Mammary epithelial cell (primary cell): ENCODE measurements at regions of chr7 and their contacts with region 1.

Region 1: DNA sequence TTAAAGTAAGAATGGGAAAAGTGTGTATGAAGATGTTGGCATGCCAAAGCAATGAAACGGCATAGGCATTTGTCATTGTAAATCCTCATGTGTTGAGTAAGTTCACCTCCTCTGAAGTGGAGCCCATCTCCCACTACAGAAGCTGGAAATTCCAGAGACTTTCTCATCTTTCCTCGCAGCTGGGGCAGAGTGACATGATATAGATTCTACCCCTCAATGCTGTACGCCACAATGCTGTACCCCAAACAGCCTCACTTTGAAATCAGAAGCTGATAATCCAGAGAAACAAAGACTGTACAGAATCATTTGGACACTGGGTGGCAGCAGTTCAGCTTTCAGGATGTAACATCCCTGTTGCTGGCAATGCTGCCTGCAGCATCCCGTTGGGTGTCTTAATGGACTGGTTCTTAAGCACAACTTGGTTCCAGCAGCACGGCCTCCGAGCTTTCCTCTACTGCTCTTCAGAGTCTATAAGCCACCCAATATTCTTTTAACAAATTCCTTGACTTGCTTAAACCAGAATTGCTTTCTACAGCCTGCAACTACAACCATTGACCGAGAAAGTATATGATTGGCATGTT is 18.8 kb downstream of the ZC3HAV1L start:
- DNase-seq: peak; percentile 50
- H3K4me3 ChIP-seq: no peak overlapping the region
- H3K27ac ChIP-seq: no peak overlapping the region
- H3K4me1 ChIP-seq: no peaks in the 10 kb centered on the region
- H3K27me3 ChIP-seq: no peaks in the 10 kb centered on the region
- CTCF ChIP-seq: peak; percentile 54 to 79

Region 2: DNA sequence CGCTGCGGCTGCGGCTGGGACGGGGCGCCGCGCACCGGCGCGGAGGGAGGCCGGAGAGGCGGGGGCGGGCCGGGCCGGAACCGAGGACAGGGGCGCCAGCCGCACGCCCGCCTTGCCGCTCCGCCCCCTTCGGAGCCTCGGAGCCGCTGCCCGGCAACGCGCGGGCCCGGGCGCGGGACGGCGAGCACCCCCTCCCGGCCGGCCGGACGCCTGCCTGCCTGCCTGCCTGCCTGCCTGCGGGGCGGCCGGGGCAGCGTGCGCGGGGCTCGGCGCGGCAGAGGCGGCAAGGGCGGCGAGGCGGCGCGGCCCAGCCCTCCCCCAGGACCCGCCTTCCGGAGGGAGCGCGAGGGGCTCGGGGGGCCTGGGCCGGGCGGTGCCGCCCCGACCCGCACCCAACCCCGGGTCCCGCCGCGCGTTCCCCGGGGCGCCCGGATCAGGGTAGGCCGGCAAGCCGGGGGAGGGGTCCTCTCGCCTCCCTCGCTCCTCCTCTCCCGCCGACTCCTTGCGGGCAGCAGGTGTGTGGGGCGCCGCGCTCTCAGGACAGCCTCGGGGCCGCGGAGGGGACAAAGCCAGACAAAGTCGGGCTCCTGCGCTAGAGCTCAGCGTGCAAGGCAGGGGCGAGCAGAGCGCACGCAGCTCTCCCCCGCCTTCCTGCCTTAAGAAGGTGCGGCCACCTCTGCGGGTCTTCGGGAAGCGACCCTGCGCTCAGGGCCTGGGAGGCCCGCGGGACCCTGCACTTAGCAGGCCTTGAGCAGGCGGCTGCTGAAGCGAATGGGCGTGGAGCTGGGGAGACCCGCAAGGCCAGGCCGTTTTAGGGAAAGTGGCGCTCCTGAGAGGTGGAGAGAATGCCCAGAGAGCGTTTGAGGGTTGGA is 35.5 kb before region 1 on chr7 and contains the start of gene KIAA1549:
- CTCF ChIA-PET with region 1: no interaction called
- dilution Hi-C with region 1: no loop called
- in situ Hi-C with region 1: no loop called
- intact Hi-C with region 1: no loop called
- DNase-seq: peak; percentile 60
- H3K4me3 ChIP-seq: peak within 1 kb of the TSS; percentile 53 to 96 (median 79)
- H3K27ac ChIP-seq: peak within 1 kb of the TSS; percentile 27
- H3K4me1 ChIP-seq: peaks cover 22% of the 10 kb centered on the region
- H3K27me3 ChIP-seq: no peaks in the 10 kb centered on the region
- CTCF ChIP-seq: peak in 1 of 2 donors; percentile 16
- total RNA-seq, gene KIAA1549: 3.8 to 7.7 TPM

Region 3: DNA sequence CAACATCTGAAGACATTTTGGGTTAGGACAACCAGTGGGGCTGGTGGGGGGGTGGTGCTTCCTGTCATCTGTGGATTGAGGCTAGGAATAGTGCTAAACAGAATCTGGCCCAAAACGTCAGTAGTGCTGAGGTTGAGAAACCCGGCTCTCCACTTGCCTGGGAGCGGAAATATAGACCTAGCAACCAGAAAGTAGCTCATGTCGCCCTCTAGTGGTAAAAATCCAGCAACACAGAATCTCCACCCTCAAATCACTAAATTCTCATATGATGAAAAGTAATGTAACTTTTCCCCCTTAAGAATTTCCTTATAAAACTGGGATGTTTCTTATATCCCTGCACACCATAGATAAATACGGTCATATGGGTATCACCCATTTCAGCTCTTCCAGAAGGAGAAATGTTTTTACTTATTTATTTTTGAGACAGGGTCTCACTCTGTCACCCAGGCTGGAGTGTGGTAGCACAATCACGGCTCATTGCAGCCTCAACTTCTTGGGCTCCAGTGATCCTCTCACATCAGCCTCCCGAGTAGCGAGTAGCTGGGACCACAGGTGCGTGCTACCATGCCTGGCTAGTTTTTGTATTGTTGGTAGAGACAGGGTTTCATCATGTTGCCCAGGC is 58.1 kb after region 1 on chr7:
- CTCF ChIA-PET with region 1: interaction called, 5 read pairs
- dilution Hi-C with region 1: no loop called
- in situ Hi-C with region 1: no loop called
- intact Hi-C with region 1: loop called (anchors 1 kb)
- DNase-seq: peak; percentile 53
- H3K4me3 ChIP-seq: no peak overlapping the region
- H3K27ac ChIP-seq: no peak overlapping the region
- H3K4me1 ChIP-seq: no peaks in the 10 kb centered on the region
- H3K27me3 ChIP-seq: no peaks in the 10 kb centered on the region
- CTCF ChIP-seq: peak; percentile 74 to 89

Region 4: GRCh38 chr7:139127648-139128047 is 110.6 kb after region 1 on chr7:
- CTCF ChIA-PET with region 1: no interaction called
- dilution Hi-C with region 1: no loop called
- in situ Hi-C with region 1: no loop called
- intact Hi-C with region 1: loop called (anchors 1 kb)
- DNase-seq: no peak
- H3K4me3 ChIP-seq: no peak overlapping the region
- H3K27ac ChIP-seq: no peak overlapping the region
- H3K4me1 ChIP-seq: no peaks in the 10 kb centered on the region
- H3K27me3 ChIP-seq: no peaks in the 10 kb centered on the region
- CTCF ChIP-seq: peak in 1 of 2 donors; percentile 4